Gastrocnemius medialis (tissue), 4 donors: ENCODE measurements at regions of chr17 and their contacts with region 1.

Region 1: DNA sequence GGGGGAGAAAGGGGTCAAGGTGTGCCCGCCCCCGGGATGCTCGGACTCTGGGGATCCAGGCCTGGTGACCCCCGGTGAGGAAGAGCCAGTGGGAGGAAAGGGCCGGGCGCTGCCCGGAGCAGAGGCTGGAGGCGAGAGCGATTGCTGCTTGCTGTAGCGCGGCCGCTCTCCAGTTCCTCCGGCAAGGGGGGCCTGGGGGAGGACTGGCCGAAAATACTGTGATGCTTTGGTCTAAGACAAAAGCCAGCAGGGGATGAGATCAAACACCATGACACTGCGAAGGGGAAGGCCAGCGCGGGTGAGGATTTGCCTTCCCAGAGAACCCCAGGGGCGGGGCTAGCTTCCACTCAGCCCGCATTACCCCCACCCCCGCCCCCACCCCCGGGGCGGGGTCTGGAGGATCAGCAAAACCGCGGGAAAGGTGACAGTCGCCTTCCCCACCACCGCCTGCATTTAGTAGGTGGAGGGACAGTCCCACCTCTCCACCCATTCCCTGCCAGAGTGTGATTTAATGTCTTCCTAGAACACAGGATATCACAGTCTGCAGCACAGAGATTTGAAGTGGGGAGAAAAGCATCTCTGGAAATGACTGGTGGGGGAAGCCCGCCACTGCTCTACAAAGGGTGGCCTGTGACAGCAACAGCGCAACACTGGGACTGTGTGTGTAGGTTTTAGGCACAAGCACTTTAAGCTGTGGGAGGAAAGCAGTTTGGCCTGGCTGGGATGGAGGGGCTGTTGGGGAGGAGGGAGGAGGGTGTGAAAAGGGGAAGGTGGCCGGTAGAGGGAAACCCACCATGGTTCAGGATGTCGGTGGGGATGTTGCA is 25.7 kb downstream of the MRC2 start:
- DNase-seq: no peak
- ATAC-seq: peak; percentile 33 to 59
- H3K4me3 ChIP-seq: peak overlapping the region; percentile 48 to 55 (median 52)
- H3K27ac ChIP-seq: peak overlapping the region in 3 of 4 donors; percentile 20 to 45 (median 35)
- H3K4me1 ChIP-seq: peaks cover 14 to 25% of the 10 kb centered on the region in 2 donors
- H3K27me3 ChIP-seq: peaks cover 4 to 11% (median 10%) of the 10 kb centered on the region in 3 donors
- CTCF ChIP-seq: no peak
- POLR2A ChIP-seq: no peak

Region 2: DNA sequence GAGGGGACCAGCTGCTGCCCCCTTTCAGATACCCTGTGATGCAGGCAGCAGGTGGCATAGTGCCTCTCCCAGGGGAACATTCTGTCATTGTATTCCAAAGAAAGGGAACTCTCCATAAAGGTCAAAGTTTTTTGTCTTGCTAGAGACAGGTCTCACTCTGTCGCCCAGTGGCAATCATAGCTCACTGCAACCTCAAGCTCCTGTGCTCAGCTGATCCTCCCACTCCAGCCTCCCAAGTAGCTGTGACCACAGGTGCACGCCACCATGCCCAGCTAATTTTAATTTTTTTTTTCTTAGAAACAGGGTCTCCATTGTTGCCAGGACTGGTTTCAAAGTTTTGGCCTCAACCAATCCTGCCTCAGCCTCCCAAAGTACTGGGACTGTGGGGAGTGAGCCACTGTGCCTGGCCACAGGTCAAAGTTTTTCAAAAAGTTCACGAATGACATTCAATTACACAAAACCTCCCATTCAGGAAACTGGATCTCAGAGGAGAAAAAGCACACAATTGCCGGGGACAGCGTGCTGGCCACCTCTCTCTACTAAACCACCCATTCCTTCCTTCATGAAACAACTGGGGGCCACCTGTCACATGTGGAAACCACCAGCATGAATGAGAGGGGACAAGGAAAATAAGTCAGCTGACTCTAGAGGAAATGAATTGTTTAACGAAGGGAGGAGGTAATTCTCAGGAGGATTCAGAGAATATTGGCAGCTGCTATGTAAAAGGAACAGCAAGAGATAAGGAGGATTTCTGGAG is 74.9 kb after region 1 on chr17:
- in situ Hi-C with region 1: no loop called
- intact Hi-C with region 1: no loop called
- DNase-seq: no peak
- ATAC-seq: no peak
- H3K4me3 ChIP-seq: no peak overlapping the region
- H3K27ac ChIP-seq: no peak overlapping the region
- H3K4me1 ChIP-seq: no peaks in the 10 kb centered on the region
- H3K27me3 ChIP-seq: peaks cover 0 to 3% (median 0%) of the 10 kb centered on the region in 3 donors
- CTCF ChIP-seq: no peak
- POLR2A ChIP-seq: no peak

Region 3: DNA sequence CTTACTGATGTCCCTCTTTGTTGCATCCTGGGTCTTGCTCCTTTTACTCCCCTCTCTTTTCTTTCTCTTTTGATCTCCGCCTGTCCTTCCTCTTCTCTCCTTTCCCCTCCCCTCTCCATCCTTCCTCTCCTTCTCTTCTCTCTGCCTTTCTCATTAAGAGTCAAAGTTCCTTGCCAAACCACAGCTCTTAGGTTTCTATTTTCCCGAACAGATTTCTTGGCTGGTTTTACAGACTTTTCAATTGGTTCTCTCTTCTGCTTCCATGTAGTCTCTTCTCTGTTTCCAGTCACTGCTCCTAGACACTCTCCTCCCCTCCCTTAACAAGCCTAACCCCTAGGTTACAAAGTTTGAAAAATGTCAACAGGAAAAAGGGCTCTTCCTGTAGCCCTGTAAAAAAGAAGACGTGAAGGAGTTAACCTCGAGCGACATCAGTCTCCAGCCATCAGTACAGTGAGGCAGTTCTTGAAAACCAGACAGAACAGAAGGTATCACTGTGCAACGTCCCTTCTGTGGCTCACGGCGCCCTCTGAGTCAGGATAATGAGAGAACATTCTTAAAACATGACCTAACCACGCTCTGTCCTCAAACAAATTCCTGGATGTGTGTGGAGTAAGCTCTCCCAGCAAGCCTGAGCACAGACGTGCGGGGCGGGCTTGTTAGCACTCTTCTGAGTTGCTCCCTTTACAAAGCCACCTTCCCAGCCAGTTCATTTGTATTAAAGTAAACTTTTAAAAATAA is 166.4 kb after region 1 on chr17:
- in situ Hi-C with region 1: loop called in 1 of 4 experiments (anchors 25 kb)
- intact Hi-C with region 1: no loop called
- DNase-seq: peak in 1 of 2 donors; percentile 10
- ATAC-seq: peak; percentile 33 to 42
- H3K4me3 ChIP-seq: no peak overlapping the region
- H3K27ac ChIP-seq: no peak overlapping the region
- H3K4me1 ChIP-seq: no peaks in the 10 kb centered on the region
- H3K27me3 ChIP-seq: no peaks in the 10 kb centered on the region
- CTCF ChIP-seq: no peak
- POLR2A ChIP-seq: no peak